Mammary epithelial cell (primary cell): ENCODE measurements at regions of chr12 and their contacts with region 1.

Region 1: GRCh38 chr12:132908145-132909044 is 21.0 kb upstream of the CHFR start:
- DNase-seq: peak; percentile 99
- H3K4me3 ChIP-seq: peak overlapping the region; percentile 83 to 92 (median 91)
- H3K27ac ChIP-seq: peak overlapping the region; percentile 55
- H3K4me1 ChIP-seq: peaks cover 4% of the 10 kb centered on the region
- H3K27me3 ChIP-seq: no peaks in the 10 kb centered on the region
- CTCF ChIP-seq: no peak

Region 2: DNA sequence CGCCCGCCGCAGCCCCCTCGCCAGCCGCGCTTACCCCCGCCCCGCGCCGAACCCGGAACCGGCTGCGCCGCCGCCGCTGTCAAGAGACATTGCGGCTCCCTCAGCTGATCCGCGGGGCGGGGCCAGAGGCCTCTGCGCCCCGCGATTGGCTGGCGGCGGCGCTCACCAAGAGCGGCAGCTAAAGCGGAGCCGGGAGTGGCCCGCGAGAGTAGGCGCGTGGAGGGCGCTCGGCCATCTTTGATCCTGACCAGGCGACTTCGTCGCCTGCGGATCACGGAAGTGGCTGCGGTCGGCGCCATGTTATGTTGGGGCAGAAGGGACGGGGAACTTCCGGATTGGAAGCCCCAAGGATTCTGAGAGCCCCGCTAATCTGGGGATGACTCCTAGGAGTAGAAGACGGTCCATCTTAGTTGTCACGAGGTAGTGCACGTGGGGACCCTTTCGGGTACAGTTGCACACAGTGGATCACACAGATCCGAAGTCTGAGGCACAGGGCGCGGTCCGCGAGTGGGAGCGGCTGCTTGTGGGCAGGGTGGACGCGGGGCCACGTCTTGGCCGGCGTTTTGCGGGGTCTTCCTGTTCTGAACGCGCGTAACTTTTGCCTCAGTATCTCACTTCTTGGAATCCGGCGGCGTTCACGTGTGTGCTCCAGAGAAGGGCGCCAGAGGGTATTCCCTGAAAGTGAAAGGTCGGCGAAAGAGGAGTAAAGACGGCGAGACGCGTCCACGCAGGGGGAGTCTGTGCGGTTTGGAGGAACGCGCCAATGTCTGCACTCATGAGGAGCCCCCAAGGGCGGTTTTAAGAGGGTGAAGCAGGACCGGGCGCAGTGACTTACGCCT is 20.7 kb before region 1 on chr12 and contains the start of gene CHFR:
- CTCF ChIA-PET with region 1: no interaction called
- dilution Hi-C with region 1: no loop called
- in situ Hi-C with region 1: no loop called
- intact Hi-C with region 1: loop called (anchors 1 kb)
- DNase-seq: peak; percentile 97
- H3K4me3 ChIP-seq: peak within 1 kb of the TSS; percentile 72 to 97 (median 76)
- H3K27ac ChIP-seq: peak within 1 kb of the TSS; percentile 82
- H3K4me1 ChIP-seq: no peaks in the 10 kb centered on the region
- H3K27me3 ChIP-seq: no peaks in the 10 kb centered on the region
- CTCF ChIP-seq: no peak
- total RNA-seq, gene CHFR: 46.2 to 47.5 TPM

Region 3: GRCh38 chr12:132948146-132949066 is 40.0 kb after region 1 on chr12:
- CTCF ChIA-PET with region 1: no interaction called
- dilution Hi-C with region 1: loop called (anchors 5 kb)
- in situ Hi-C with region 1: no loop called
- intact Hi-C with region 1: no loop called
- DNase-seq: no peak
- H3K4me3 ChIP-seq: no peak overlapping the region
- H3K27ac ChIP-seq: no peak overlapping the region
- H3K4me1 ChIP-seq: no peaks in the 10 kb centered on the region
- H3K27me3 ChIP-seq: no peaks in the 10 kb centered on the region
- CTCF ChIP-seq: no peak